ENCODE measurements at regions of chr4 and their contacts with region 1.

Region 1: GRCh38 chr4:152454398-152455011 is 81.4 kb downstream of the FBXW7 start:
- DNase-seq: no peak
- ATAC-seq: peak; percentile 15; the same call in 2 of the 3 replicates
- H3K4me3 ChIP-seq: no peak overlapping the region
- H3K27ac ChIP-seq: no peak overlapping the region
- H3K4me1 ChIP-seq: peaks cover 12% of the 10 kb centered on the region
- H3K27me3 ChIP-seq: no peaks in the 10 kb centered on the region
- CTCF ChIP-seq: peak; percentile 50 to 60 (median 60)
- EP300 ChIP-seq: no peak
- POLR2A ChIP-seq: no peak
- RAD21 ChIP-seq: peak; percentile 65

Region 2: GRCh38 chr4:151644622-151645021 is 809.9 kb before region 1 on chr4:
- CTCF ChIA-PET with region 1: no interaction called
- POLR2A ChIA-PET with region 1: no interaction called
- RAD21 ChIA-PET with region 1: no interaction called
- SMC1A ChIA-PET with region 1: no interaction called
- in situ Hi-C with region 1: no loop called
- intact Hi-C with region 1: no loop called
- DNase-seq: no peak
- ATAC-seq: peak; percentile 56
- H3K4me3 ChIP-seq: no peak overlapping the region
- H3K27ac ChIP-seq: no peak overlapping the region
- H3K4me1 ChIP-seq: no peaks in the 10 kb centered on the region
- H3K27me3 ChIP-seq: no peaks in the 10 kb centered on the region; a peak in 1 of 4 replicates
- CTCF ChIP-seq: peak; percentile 22 to 40 (median 29); a peak in 4 of 6 replicates
- EP300 ChIP-seq: no peak
- POLR2A ChIP-seq: no peak
- RAD21 ChIP-seq: 0 out of 2 replicates have a peak, but pooled peaks have one; percentile 19

Region 3: DNA sequence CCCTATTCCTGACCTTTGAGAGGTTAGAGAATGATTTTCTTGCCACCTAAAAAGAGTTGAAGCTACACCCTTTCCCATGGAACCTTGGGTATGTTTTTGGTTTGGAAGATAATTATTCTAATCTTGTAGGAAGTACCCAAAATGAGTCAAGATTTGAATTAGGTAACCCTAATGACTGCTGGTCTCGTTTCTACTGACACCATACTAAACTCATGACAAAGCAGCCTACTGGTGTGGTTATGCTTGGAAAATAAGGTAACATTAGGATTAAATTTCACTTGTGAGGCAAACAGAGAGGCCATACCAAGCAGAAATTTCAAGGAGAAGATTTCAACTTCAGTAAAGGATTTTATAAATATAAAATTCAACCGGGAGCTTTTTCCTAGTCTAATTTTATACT is 26.5 kb before region 1 on chr4:
- CTCF ChIA-PET with region 1: interaction called, 4 read pairs
- POLR2A ChIA-PET with region 1: no interaction called
- RAD21 ChIA-PET with region 1: interaction called, 3 read pairs
- SMC1A ChIA-PET with region 1: interaction called, 10 read pairs
- in situ Hi-C with region 1: no loop called
- intact Hi-C with region 1: no loop called
- DNase-seq: no peak
- ATAC-seq: no peak
- H3K4me3 ChIP-seq: no peak overlapping the region
- H3K27ac ChIP-seq: no peak overlapping the region
- H3K4me1 ChIP-seq: peaks cover 4% of the 10 kb centered on the region
- H3K27me3 ChIP-seq: no peaks in the 10 kb centered on the region
- CTCF ChIP-seq: no peak
- EP300 ChIP-seq: no peak
- POLR2A ChIP-seq: no peak
- RAD21 ChIP-seq: no peak

Region 4: GRCh38 chr4:152468408-152468807 is 13.9 kb after region 1 on chr4:
- CTCF ChIA-PET with region 1: interaction called, 11 read pairs
- POLR2A ChIA-PET with region 1: interaction called, 11 read pairs
- RAD21 ChIA-PET with region 1: interaction called, 6 read pairs
- SMC1A ChIA-PET with region 1: interaction called, 5 read pairs
- in situ Hi-C with region 1: no loop called
- intact Hi-C with region 1: no loop called
- DNase-seq: no peak
- ATAC-seq: no peak
- H3K4me3 ChIP-seq: no peak overlapping the region
- H3K27ac ChIP-seq: no peak overlapping the region
- H3K4me1 ChIP-seq: peaks cover 11% of the 10 kb centered on the region
- H3K27me3 ChIP-seq: no peaks in the 10 kb centered on the region
- CTCF ChIP-seq: no peak
- EP300 ChIP-seq: no peak
- POLR2A ChIP-seq: no peak
- RAD21 ChIP-seq: no peak